Panc1 (cell line): ENCODE measurements at regions of chr11 and their contacts with region 1.

Region 1: GRCh38 chr11:110141812-110142211 is 48.6 kb downstream of the ZC3H12C start:
- DNase-seq: no peak
- ATAC-seq: no peak
- H3K4me3 ChIP-seq: no peak overlapping the region
- H3K27ac ChIP-seq: no peak overlapping the region
- H3K4me1 ChIP-seq: no peaks in the 10 kb centered on the region
- H3K27me3 ChIP-seq: no peaks in the 10 kb centered on the region
- CTCF ChIP-seq: no peak

Region 2: DNA sequence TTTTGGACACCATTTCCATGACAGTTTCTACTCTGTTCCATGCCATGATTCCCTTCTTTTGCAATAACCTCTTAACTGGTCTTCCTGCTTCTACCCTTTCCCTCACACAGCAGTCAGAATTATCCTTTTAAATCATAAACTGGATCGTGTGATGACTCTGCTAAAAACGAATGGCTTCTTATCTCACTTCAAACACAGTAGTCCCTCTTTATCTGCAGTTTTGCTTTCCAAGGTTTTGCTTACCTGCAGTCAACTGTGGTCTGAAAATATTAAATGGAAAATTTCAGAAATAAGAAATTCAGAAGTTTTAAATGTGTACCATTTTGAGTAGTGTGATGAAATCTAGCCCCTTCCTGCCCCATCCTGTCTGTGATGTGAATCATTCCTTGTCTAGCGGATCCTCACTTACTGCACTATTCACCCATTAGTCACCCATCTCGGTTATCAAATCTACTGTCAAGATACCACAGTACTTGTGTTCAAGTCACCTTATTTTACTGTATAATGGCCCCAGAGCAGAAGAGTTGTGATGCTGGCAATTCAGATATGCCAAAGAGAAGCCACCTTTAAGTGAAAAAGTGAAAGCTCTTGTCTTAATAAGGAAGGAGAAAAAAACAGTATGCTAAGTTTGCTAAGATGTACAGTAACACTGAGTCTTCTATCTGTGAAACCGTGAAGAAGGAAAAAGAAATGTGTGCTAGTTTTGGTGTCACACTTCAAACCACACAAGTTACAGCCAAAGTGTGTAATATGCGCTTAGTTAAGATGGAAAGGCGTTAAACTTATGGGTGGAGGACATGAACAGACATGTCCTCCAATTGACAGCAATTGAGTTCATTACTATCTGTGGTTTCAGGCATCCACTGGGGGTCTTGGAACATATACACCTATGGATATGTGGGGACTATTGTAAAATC is 1193.9 kb before region 1 on chr11:
- CTCF ChIA-PET with region 1: no interaction called
- POLR2A ChIA-PET with region 1: no interaction called
- in situ Hi-C with region 1: no loop called
- intact Hi-C with region 1: no loop called
- DNase-seq: no peak
- ATAC-seq: no peak
- H3K4me3 ChIP-seq: no peak overlapping the region
- H3K27ac ChIP-seq: no peak overlapping the region
- H3K4me1 ChIP-seq: no peaks in the 10 kb centered on the region
- H3K27me3 ChIP-seq: no peaks in the 10 kb centered on the region
- CTCF ChIP-seq: no peak

Region 3: GRCh38 chr11:109972181-109972715 is 169.6 kb before region 1 on chr11:
- CTCF ChIA-PET with region 1: no interaction called
- POLR2A ChIA-PET with region 1: no interaction called
- in situ Hi-C with region 1: no loop called
- intact Hi-C with region 1: no loop called
- DNase-seq: no peak
- ATAC-seq: no peak
- H3K4me3 ChIP-seq: no peak overlapping the region
- H3K27ac ChIP-seq: no peak overlapping the region
- H3K4me1 ChIP-seq: no peaks in the 10 kb centered on the region
- H3K27me3 ChIP-seq: no peaks in the 10 kb centered on the region; the same call in 1 of the 2 replicates
- CTCF ChIP-seq: no peak

Region 4: DNA sequence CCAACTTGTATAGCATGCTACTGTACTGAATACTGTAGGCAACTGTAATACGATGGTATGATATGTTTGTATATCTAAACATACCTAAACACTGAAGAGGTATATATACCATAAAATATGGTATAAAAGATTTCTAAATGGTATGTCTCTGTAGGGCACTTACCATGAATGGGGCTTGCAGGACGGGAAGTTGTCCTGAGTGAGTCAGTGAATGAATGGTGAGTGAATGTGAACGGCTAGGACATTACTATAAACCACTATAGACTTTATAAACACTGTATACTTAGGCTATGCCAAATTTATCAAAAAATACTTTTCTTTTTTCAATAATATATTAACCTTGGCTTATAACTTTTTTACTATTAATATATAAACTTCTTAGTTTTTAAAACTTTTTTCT is 18.2 kb after region 1 on chr11:
- CTCF ChIA-PET with region 1: no interaction called
- POLR2A ChIA-PET with region 1: no interaction called
- in situ Hi-C with region 1: no loop called
- intact Hi-C with region 1: no loop called
- DNase-seq: no peak
- ATAC-seq: no peak
- H3K4me3 ChIP-seq: no peak overlapping the region
- H3K27ac ChIP-seq: no peak overlapping the region
- H3K4me1 ChIP-seq: no peaks in the 10 kb centered on the region
- H3K27me3 ChIP-seq: no peaks in the 10 kb centered on the region
- CTCF ChIP-seq: no peak

Region 5: DNA sequence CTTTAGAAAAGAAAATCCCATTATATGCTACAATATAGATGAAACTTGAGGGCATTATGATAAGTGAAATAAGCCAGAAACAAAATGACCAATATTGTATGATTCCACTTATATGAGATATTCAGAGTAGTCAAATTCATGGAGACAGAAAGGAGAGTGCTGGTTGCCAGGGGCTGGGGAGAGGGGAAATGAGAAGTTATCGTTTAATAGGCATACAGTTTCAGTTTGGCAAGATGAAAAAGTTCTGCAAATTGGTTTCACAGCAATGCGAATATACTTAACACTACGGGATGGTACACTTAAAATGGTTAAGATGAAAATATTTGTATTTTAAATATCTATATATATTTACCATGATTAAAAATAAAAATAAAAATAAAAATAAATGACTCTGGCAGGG is 185.7 kb after region 1 on chr11:
- CTCF ChIA-PET with region 1: no interaction called
- POLR2A ChIA-PET with region 1: no interaction called
- in situ Hi-C with region 1: no loop called
- intact Hi-C with region 1: no loop called
- DNase-seq: no peak
- ATAC-seq: no peak
- H3K4me3 ChIP-seq: peak overlapping the region; percentile 46 to 84
- H3K27ac ChIP-seq: peak overlapping the region; percentile 44
- H3K4me1 ChIP-seq: peaks cover 12% of the 10 kb centered on the region
- H3K27me3 ChIP-seq: no peaks in the 10 kb centered on the region
- CTCF ChIP-seq: no peak

Region 6: DNA sequence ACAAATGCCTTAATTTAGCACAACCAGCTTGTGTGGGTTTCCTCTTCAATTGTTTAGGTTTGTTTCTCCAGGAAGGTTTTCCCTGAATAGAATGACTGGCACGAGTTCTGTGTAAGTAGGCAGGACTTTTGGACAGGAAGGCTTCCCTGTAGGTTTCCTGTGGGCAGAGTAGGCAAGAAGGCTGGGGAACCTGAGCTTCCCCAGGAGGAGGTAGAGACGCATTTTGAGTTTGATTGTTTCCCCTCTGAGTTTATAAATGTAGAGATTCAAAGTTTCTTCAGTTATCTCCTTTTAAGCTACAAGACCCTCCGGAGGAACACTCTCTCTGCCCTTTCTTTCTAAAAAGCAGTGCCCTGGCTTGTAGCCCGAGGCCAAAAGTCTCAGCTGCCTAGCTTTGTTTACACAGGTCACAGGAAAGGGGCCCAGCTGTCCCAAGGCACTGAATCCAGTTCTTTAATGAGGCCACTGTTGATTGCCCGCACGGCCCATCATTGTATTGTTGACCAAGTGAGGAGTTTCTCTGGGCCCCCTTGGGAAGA is 221.2 kb after region 1 on chr11:
- CTCF ChIA-PET with region 1: interaction called, 10 read pairs
- POLR2A ChIA-PET with region 1: no interaction called
- in situ Hi-C with region 1: no loop called
- intact Hi-C with region 1: no loop called
- DNase-seq: no peak
- ATAC-seq: peak; percentile 95
- H3K4me3 ChIP-seq: peak overlapping the region in 1 of 2 experiments; percentile 45; a peak in 2 of 4 replicates
- H3K27ac ChIP-seq: peak overlapping the region; percentile 90
- H3K4me1 ChIP-seq: peaks cover 21% of the 10 kb centered on the region
- H3K27me3 ChIP-seq: no peaks in the 10 kb centered on the region
- CTCF ChIP-seq: no peak